PC-3 (cell line): ENCODE measurements at regions of chr16 and their contacts with region 1.

Region 1: GRCh38 chr16:21708533-21709115 is 44.9 kb downstream of the OTOA start:
- DNase-seq: peak; percentile 82
- ATAC-seq: peak; percentile 54
- H3K4me3 ChIP-seq: no peak overlapping the region
- H3K27ac ChIP-seq: no peak overlapping the region
- H3K4me1 ChIP-seq: no peaks in the 10 kb centered on the region
- H3K27me3 ChIP-seq: no peaks in the 10 kb centered on the region
- CTCF ChIP-seq: peak; percentile 79

Region 2: DNA sequence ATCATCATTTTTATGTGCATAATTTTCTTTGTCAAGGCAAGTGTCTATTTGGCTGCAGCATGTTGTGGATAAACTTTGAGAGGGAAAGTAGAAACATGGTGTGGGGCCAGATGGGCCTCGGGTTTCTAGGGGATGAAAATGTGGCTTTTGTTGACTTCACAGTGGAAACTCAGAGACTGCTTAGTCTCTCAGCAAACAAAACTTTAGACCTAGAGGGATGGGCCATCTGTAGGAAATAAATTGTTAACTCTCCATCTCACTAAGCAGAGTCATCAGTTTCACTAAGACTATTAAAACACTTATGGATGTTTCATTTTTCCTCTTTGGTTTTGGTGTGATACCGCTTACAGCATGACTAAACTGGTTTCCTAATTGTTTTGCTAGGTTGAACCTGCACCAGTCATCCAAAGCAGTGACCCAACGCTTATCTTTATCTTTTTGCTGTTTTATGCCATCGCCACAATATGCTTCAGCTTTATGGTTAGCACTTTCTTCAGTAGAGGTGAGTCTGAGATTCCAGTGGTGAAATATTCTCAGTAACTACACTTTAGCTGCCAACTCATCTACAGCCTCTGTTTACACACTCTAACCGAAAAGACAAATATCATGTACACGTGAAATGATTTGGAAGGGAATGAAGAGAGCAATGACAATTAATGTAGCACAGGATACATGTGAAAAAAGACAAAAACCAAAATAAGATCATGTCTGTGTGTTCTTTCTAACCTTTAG is 369.9 kb before region 1 on chr16:
- CTCF ChIA-PET with region 1: no interaction called
- POLR2A ChIA-PET with region 1: no interaction called
- intact Hi-C with region 1: no loop called
- DNase-seq: no peak
- ATAC-seq: no peak
- H3K4me3 ChIP-seq: no peak overlapping the region
- H3K27ac ChIP-seq: no peak overlapping the region
- H3K4me1 ChIP-seq: no peaks in the 10 kb centered on the region
- H3K27me3 ChIP-seq: no peaks in the 10 kb centered on the region
- CTCF ChIP-seq: no peak

Region 3: GRCh38 chr16:21656795-21657768 is 51.5 kb before region 1 on chr16:
- CTCF ChIA-PET with region 1: no interaction called
- POLR2A ChIA-PET with region 1: interaction called, 6 read pairs
- intact Hi-C with region 1: loop called (anchors 1 kb)
- DNase-seq: peak; percentile 58
- ATAC-seq: peak; percentile 31; the same call in 1 of the 2 replicates
- H3K4me3 ChIP-seq: no peak overlapping the region
- H3K27ac ChIP-seq: no peak overlapping the region
- H3K4me1 ChIP-seq: no peaks in the 10 kb centered on the region
- H3K27me3 ChIP-seq: no peaks in the 10 kb centered on the region
- CTCF ChIP-seq: peak; percentile 85

Region 4: GRCh38 chr16:21684199-21684598 is 24.4 kb before region 1 on chr16:
- CTCF ChIA-PET with region 1: no interaction called
- POLR2A ChIA-PET with region 1: interaction called, 10 read pairs
- intact Hi-C with region 1: no loop called
- DNase-seq: no peak
- ATAC-seq: no peak
- H3K4me3 ChIP-seq: no peak overlapping the region
- H3K27ac ChIP-seq: no peak overlapping the region
- H3K4me1 ChIP-seq: no peaks in the 10 kb centered on the region
- H3K27me3 ChIP-seq: peaks cover 3% of the 10 kb centered on the region; the same call in 1 of the 2 replicates
- CTCF ChIP-seq: peak; percentile 66